B cell (primary cell): ENCODE measurements at regions of chr12 and their contacts with region 1.

Region 1: GRCh38 chr12:54201001-54201794 is 12.4 kb upstream of the SMUG1 start:
- DNase-seq: peak; percentile 79
- ATAC-seq: peak; percentile 91
- H3K4me3 ChIP-seq: no peak overlapping the region
- H3K4me3 Mint-ChIP-seq: no peak overlapping the region
- H3K27ac ChIP-seq: no peak overlapping the region
- H3K27ac Mint-ChIP-seq: no peak overlapping the region
- H3K4me1 ChIP-seq: peaks cover 16% of the 10 kb centered on the region in 2 donors
- H3K4me1 Mint-ChIP-seq: peaks cover 21% of the 10 kb centered on the region
- H3K27me3 ChIP-seq: peaks cover 0 to 71% (median 29%) of the 10 kb centered on the region in 4 experiments
- H3K27me3 Mint-ChIP-seq: peaks cover 62% of the 10 kb centered on the region
- CTCF ChIP-seq: peak; percentile 94

Region 2: DNA sequence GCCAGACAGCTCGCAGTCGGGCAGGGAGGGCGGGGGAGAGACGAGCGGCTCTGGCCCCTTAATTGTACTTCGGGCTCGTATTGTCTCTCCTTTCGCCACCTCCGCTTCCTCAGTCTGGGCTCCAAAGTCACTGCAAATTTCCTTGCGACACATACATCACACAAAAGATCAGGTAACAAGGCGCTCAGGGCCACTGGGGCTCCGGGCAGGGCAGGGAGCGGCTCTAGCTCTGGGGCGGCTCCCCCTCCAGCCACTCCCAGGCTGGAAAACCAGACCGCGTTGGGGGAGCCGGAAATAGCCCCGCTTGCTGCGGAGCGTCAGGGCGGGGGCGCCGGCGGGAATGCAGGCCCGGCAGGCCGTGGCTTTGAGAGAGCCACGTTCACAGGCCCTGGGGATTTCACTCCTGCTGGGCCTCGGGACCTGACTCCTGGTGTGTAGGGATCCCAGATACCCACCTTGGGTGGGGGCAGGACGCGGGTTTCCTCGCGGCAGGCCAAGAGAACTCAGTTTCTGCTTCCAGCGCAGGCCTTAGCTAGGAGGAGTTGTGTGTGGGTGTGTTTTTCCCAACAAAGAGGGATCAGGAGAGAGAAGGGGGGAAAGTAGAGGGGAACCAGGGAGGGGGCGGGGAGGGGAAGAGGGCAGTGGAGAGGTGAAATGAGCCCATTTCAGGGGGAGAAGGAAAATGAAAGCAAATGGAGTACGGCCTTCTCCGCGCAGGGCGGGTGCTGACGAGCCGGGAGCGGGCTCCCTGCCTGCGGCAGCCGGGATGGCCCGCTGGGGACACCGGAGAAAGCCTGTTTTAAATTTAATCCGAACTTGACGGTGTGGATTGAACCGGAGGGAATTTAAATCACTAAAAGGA is 205.6 kb before region 1 on chr12:
- CTCF ChIA-PET with region 1: interaction called, 20 read pairs
- POLR2A ChIA-PET with region 1: no interaction called
- intact Hi-C with region 1: no loop called
- DNase-seq: peak; percentile 62
- ATAC-seq: peak; percentile 43
- H3K4me3 ChIP-seq: peak overlapping the region in 4 of 5 experiments; percentile 44 to 60 (median 58)
- H3K4me3 Mint-ChIP-seq: peak overlapping the region; percentile 89
- H3K27ac ChIP-seq: no peak overlapping the region
- H3K27ac Mint-ChIP-seq: peak overlapping the region; percentile 47
- H3K4me1 ChIP-seq: peaks cover 37 to 70% of the 10 kb centered on the region in 2 donors
- H3K4me1 Mint-ChIP-seq: peaks cover 35% of the 10 kb centered on the region
- H3K27me3 ChIP-seq: peaks cover 0 to 98% (median 84%) of the 10 kb centered on the region in 4 experiments
- H3K27me3 Mint-ChIP-seq: peaks cover 87% of the 10 kb centered on the region
- CTCF ChIP-seq: no peak

Region 3: DNA sequence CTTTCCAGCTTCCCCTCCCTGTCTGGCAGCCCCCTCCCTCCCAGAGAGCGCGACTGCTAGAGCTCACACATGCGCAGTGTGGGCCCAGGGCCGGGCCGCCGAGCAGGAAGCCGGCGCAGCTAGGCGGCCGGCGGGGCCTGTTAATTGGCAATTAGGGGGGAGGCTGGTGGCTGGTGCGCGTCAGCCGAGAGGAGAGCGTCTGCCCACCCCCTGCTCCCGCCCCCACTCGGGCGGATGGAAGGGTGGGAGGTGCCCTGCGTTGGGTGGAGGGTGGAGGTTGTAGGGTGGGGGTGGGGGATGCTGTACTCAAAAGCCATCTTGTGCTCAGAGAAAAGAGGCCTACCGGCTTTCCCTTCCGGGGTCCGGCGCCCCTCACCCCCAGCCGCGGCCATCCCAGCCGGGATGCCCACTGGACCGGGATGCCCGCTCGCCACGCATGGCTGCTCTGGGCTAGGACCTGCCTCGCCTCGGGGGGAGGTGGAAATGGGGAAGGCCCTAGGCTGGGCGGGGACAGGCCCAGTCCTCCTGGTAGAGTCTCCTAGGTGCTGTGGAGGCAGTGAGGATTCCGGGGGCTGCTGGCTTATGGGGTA is 183.2 kb before region 1 on chr12:
- CTCF ChIA-PET with region 1: interaction called, 11 read pairs
- POLR2A ChIA-PET with region 1: no interaction called
- intact Hi-C with region 1: no loop called
- DNase-seq: peak; percentile 84
- ATAC-seq: peak; percentile 87
- H3K4me3 ChIP-seq: peak overlapping the region in 4 of 5 experiments; percentile 43 to 71 (median 48)
- H3K4me3 Mint-ChIP-seq: peak overlapping the region; percentile 90
- H3K27ac ChIP-seq: peak overlapping the region; percentile 30 to 40
- H3K27ac Mint-ChIP-seq: peak overlapping the region; percentile 83
- H3K4me1 ChIP-seq: peaks cover 25 to 42% of the 10 kb centered on the region in 2 donors
- H3K4me1 Mint-ChIP-seq: peaks cover 22% of the 10 kb centered on the region
- H3K27me3 ChIP-seq: peaks cover 0 to 93% (median 73%) of the 10 kb centered on the region in 4 experiments
- H3K27me3 Mint-ChIP-seq: peaks cover 63% of the 10 kb centered on the region
- CTCF ChIP-seq: no peak

Region 4: GRCh38 chr12:54024127-54024526 is 177.1 kb before region 1 on chr12:
- CTCF ChIA-PET with region 1: interaction called, 12 read pairs
- POLR2A ChIA-PET with region 1: no interaction called
- intact Hi-C with region 1: no loop called
- DNase-seq: no peak
- ATAC-seq: no peak
- H3K4me3 ChIP-seq: no peak overlapping the region
- H3K4me3 Mint-ChIP-seq: no peak overlapping the region
- H3K27ac ChIP-seq: no peak overlapping the region
- H3K27ac Mint-ChIP-seq: no peak overlapping the region
- H3K4me1 ChIP-seq: peaks cover 0 to 23% of the 10 kb centered on the region in 2 donors
- H3K4me1 Mint-ChIP-seq: peaks cover 17% of the 10 kb centered on the region
- H3K27me3 ChIP-seq: peaks cover 0 to 92% (median 79%) of the 10 kb centered on the region in 4 experiments
- H3K27me3 Mint-ChIP-seq: peaks cover 71% of the 10 kb centered on the region
- CTCF ChIP-seq: no peak

Region 5: DNA sequence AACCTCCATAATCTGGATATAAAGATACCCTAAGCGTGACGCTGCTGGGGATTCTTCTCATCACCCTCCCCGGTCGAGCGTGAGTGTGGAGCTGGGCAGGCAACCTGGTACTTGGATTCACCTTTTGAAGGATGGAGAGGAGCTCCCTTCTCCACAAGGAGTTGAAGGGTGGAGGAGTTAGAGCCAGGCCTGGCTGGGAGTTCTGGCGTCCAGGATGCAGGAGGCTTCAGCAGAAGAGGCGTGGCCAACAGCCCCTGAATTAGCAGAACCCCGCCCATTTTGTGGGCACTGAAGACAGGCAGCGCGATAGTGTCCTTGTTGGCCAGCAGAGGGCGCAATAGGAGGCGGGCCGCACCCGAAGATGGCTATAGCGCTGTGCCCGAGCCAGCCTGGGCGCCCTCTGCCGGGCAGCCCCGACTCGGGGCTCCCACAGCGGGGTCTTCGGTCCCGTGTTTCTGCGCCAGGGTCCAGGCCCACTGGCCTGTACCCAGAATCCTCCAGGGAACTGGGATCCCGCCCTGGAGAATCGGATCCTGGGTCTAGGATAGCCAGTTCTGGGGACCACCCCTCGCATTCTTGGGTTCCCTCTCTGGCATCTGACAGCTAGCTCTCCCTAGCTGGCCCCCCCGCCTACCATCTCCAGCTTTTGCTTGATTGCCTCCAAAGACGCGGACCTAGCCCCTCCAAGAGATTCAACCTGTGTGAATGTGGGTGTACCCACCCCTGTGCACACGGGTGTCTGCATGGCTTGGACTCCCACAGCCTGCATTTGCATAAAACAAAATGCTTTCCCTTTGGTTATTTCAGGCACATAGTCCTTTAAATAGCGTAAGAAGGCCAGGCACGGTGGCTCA is 13.6 kb after region 1 on chr12:
- CTCF ChIA-PET with region 1: interaction called, 118 read pairs
- POLR2A ChIA-PET with region 1: interaction called, 3 read pairs
- intact Hi-C with region 1: no loop called
- DNase-seq: peak; percentile 95
- ATAC-seq: peak; percentile 83
- H3K4me3 ChIP-seq: peak overlapping the region; percentile 3 to 58 (median 46)
- H3K4me3 Mint-ChIP-seq: peak overlapping the region; percentile 90
- H3K27ac ChIP-seq: no peak overlapping the region
- H3K27ac Mint-ChIP-seq: peak overlapping the region; percentile 33
- H3K4me1 ChIP-seq: peaks cover 36 to 46% of the 10 kb centered on the region in 2 donors
- H3K4me1 Mint-ChIP-seq: peaks cover 44% of the 10 kb centered on the region
- H3K27me3 ChIP-seq: peaks cover 0 to 30% (median 6%) of the 10 kb centered on the region in 4 experiments
- H3K27me3 Mint-ChIP-seq: peaks cover 6% of the 10 kb centered on the region
- CTCF ChIP-seq: peak; percentile 100